Heart right ventricle (tissue), 16 donors: ENCODE measurements at regions of chr16 and their contacts with region 1.

Region 1: GRCh38 chr16:11819798-11820197 is 22.7 kb upstream of the ZC3H7A start:
- DNase-seq: no peak
- ATAC-seq: no peak
- H3K4me3 ChIP-seq: no peak overlapping the region
- H3K27ac ChIP-seq: no peak overlapping the region
- H3K4me1 ChIP-seq: peaks cover 0 to 23% (median 7%) of the 10 kb centered on the region in 9 donors
- H3K27me3 ChIP-seq: no peaks in the 10 kb centered on the region
- CTCF ChIP-seq: no peak

Region 2: DNA sequence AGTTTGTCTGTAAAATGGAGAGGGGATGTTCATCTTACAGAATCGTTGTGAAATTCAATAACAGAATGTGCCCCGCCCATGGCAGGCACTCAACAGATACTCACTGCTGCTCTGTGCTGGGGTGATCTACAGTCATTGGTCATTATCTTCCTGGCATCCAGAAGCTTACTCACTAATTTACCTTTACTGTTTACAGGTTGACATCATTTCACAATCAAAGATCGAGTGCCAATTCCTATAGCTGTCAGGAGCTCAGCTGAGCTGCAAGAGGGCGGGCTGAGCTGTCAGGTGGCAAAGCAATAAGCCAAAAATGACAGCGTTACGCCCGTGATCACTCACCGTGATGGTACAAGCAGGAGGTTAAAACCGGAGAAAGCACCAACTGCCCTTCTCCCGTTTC is 284.3 kb before region 1 on chr16:
- intact Hi-C with region 1: loop called in 3 of 10 experiments (anchors 10 kb)
- DNase-seq: no peak
- ATAC-seq: no peak
- H3K4me3 ChIP-seq: no peak overlapping the region
- H3K27ac ChIP-seq: no peak overlapping the region
- H3K4me1 ChIP-seq: peaks cover 0 to 13% (median 0%) of the 10 kb centered on the region in 9 donors
- H3K27me3 ChIP-seq: no peaks in the 10 kb centered on the region
- CTCF ChIP-seq: no peak

Region 3: GRCh38 chr16:11689031-11689761 is 130.6 kb before region 1 on chr16:
- intact Hi-C with region 1: no loop called
- DNase-seq: no peak
- ATAC-seq: peak in 1 of 8 donors; percentile 59
- H3K4me3 ChIP-seq: no peak overlapping the region
- H3K27ac ChIP-seq: peak overlapping the region in 4 of 10 donors; percentile 6 to 62 (median 49)
- H3K4me1 ChIP-seq: peaks cover 7 to 52% (median 42%) of the 10 kb centered on the region in 9 donors
- H3K27me3 ChIP-seq: no peaks in the 10 kb centered on the region
- CTCF ChIP-seq: no peak

Region 4: DNA sequence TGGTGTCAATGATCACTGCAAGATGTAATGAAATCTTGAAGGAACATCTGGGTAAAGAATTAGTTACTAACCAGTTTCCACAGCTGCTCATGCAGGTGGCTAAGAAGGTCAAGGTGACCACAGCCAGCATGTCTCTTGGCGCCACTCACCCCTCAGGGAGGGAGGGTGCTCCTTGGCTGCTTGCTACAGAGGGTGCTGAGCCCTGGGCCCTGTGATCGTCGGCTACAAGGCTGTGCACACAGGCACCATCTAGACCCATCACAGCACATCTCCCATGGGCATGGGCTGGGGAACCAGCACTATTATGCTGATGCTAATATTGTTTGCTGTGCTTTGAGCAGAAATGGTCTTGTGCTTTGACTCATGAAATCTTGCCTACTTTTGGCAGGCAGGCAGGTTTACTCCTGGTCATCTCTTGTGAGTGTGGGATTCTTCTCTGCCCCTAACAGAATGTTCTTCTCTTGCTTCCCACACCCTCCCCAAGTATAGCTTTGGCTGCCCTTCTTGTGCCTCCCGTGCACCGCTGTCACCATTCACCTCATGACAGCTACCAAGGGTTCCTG is 113.5 kb before region 1 on chr16:
- intact Hi-C with region 1: no loop called
- DNase-seq: peak; percentile 32 to 48
- ATAC-seq: peak; percentile 65 to 98 (median 88)
- H3K4me3 ChIP-seq: no peak overlapping the region
- H3K27ac ChIP-seq: peak overlapping the region; percentile 0 to 78 (median 62)
- H3K4me1 ChIP-seq: peaks cover 3 to 47% (median 27%) of the 10 kb centered on the region in 9 donors
- H3K27me3 ChIP-seq: no peaks in the 10 kb centered on the region
- CTCF ChIP-seq: no peak

Region 5: GRCh38 chr16:11880007-11880406 is 60.2 kb after region 1 on chr16:
- intact Hi-C with region 1: no loop called
- DNase-seq: no peak
- ATAC-seq: no peak
- H3K4me3 ChIP-seq: no peak overlapping the region
- H3K27ac ChIP-seq: no peak overlapping the region
- H3K4me1 ChIP-seq: peaks cover 0 to 19% (median 0%) of the 10 kb centered on the region in 9 donors
- H3K27me3 ChIP-seq: no peaks in the 10 kb centered on the region
- CTCF ChIP-seq: no peak

Region 6: DNA sequence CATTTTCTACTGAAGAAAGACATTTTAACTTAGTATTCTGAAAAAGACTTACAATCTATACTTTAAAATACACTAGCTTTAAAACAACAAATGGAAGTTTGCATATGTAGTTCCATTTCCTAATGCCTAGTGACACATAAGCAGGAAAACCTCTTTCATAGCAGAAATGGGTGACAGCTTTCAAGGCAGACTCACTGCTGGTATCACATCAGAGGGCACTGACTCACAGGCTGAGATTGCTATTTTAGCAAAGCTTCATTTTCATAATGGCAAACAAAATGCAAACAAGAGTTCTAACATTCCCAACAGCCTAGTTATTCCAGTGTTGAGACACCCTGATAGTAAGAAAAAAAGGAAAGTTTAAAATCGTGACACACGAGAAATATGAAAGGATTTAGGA is 77.0 kb after region 1 on chr16:
- intact Hi-C with region 1: no loop called
- DNase-seq: no peak
- ATAC-seq: no peak
- H3K4me3 ChIP-seq: no peak overlapping the region
- H3K27ac ChIP-seq: peak overlapping the region in 1 of 10 donors; percentile 10
- H3K4me1 ChIP-seq: peaks cover 0 to 37% (median 14%) of the 10 kb centered on the region in 9 donors
- H3K27me3 ChIP-seq: no peaks in the 10 kb centered on the region
- CTCF ChIP-seq: no peak